ENCODE measurements at regions of chr7 and their contacts with region 1.

Region 1: DNA sequence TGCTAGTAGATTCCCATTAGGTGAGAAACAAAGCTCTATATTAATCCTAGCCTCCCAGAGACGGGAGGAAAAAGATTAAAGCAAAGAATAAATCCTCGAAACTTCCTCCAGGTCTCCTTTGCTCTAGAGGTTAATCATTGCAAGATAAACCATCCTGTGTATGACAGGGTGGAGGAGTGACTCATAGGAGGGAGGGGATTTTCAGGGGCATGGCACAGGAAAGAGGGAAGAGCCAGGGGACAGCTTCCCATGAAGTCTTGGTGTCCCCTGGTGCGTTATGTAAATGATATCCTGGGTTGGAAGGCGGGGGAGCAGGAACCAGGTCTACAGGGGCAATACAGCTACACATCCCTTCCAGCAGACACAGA is 780 bp downstream of the CYP3A5 start:
- DNase-seq: no peak
- ATAC-seq: peak in 3 of 4 donors; percentile 37 to 58 (median 57)
- H3K4me3 ChIP-seq: peak overlapping the region; percentile 44 to 71 (median 60)
- H3K27ac ChIP-seq: peak overlapping the region; percentile 74 to 95 (median 87)
- H3K4me1 ChIP-seq: peaks cover 0 to 18% (median 0%) of the 10 kb centered on the region in 4 donors
- H3K27me3 ChIP-seq: no peaks in the 10 kb centered on the region
- CTCF ChIP-seq: no peak
- POLR2A ChIP-seq: peak; percentile 33

Region 2: DNA sequence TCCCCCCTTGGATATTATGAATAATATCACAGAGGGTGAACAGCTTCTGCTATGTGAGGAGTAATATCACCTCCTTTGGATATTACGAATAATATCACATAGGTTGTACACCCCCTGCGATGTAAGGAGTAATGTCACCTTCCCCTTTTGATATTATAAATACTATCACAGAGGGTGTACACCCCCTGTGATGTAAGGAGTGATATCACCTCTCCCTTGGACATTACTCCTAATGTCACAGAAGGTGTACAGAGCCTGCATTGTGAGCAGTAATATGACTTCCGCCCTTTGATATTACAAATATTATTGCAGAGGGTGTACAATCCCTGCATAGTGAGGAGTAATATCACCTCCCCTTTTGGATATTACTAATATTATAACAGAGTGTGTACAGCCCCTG is 90.1 kb before region 1 on chr7:
- intact Hi-C with region 1: no loop called
- DNase-seq: no peak
- ATAC-seq: no peak
- H3K4me3 ChIP-seq: no peak overlapping the region
- H3K27ac ChIP-seq: no peak overlapping the region
- H3K4me1 ChIP-seq: no peaks in the 10 kb centered on the region
- H3K27me3 ChIP-seq: no peaks in the 10 kb centered on the region
- CTCF ChIP-seq: no peak
- POLR2A ChIP-seq: no peak

Region 3: GRCh38 chr7:99837649-99838361 is 158.8 kb after region 1 on chr7:
- intact Hi-C with region 1: loop called in 1 of 2 experiments (anchors 10 kb)
- DNase-seq: no peak
- ATAC-seq: peak; percentile 24 to 91 (median 74)
- H3K4me3 ChIP-seq: no peak overlapping the region
- H3K27ac ChIP-seq: no peak overlapping the region
- H3K4me1 ChIP-seq: peaks cover 0 to 19% (median 9%) of the 10 kb centered on the region in 4 donors
- H3K27me3 ChIP-seq: no peaks in the 10 kb centered on the region
- CTCF ChIP-seq: peak; percentile 32 to 50 (median 39)
- POLR2A ChIP-seq: no peak